Activated CD8-positive, alpha-beta T cell treated with anti-CD3 and anti-CD28 coated beads, Interleukin-2, amount 10 ng/mL, durations not matched to agents 7 days and 5 days (primary cell): ENCODE measurements at regions of chr15 and their contacts with region 1.

Region 1: DNA sequence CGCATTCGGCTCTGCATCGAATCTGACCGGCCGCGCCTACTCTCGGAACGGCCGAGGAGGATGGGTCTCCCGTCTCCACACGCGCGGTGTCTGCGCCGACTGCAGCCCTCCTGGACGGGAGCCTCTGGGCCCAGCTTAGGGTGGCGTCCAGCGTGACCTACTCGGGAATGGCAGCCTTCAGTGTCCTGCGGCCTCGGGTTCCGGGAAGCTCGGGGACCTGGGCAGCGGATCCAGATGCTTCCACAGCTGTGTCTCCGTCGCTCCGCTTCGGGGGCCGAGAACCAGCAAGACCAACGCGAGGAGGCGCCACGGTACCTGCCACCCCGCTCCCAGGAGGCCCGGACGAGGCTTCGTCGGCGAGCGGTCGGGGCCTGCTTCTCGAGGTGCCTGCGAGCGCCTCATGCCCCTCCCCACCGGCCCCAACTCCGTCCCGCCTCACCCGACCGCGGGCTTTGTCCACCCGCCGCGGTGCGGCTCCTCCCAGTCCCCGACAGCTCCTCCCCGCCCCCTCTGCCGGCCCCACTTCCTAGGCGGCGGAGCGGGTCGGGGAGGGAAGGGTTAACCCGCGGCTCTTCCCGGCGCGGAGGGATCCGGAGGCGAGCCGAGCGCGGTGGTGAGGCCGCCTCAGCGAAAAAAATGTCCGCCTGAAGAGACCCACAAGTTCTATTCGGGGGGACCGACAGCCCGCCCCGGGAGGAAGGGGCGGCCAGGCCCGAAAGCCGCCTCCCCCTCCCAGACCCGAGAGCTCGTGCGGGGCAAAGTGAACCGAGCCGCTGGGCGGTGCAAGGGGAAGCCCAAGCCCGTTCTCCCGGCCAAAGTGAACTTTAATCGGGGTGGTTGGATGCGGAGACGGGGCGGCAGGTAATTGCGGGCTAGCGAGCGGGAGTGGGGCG is at the start of gene TCF12:
- DNase-seq: peak; percentile 90
- ATAC-seq: peak; percentile 80
- H3K4me3 Mint-ChIP-seq: peak within 1 kb of the TSS; percentile 95
- H3K27ac Mint-ChIP-seq: peak within 1 kb of the TSS; percentile 91
- H3K4me1 Mint-ChIP-seq: peaks cover 33% of the 10 kb centered on the region
- H3K27me3 Mint-ChIP-seq: no peaks in the 10 kb centered on the region
- total RNA-seq, gene TCF12: 63.4 to 70.7 TPM

Region 2: GRCh38 chr15:56886932-56887781 is 31.1 kb before region 1 on chr15:
- CTCF ChIA-PET with region 1: interaction called, 5 read pairs
- POLR2A ChIA-PET with region 1: interaction called, 31 read pairs
- DNase-seq: peak; percentile 78
- ATAC-seq: peak; percentile 97
- H3K4me3 Mint-ChIP-seq: peak overlapping the region; percentile 77
- H3K27ac Mint-ChIP-seq: peak overlapping the region; percentile 75
- H3K4me1 Mint-ChIP-seq: peaks cover 20% of the 10 kb centered on the region
- H3K27me3 Mint-ChIP-seq: peaks cover 4% of the 10 kb centered on the region

Region 3: GRCh38 chr15:56906771-56907170 is 11.5 kb before region 1 on chr15:
- CTCF ChIA-PET with region 1: interaction called, 12 read pairs
- POLR2A ChIA-PET with region 1: interaction called, 3 read pairs
- DNase-seq: no peak
- ATAC-seq: no peak
- H3K4me3 Mint-ChIP-seq: no peak overlapping the region
- H3K27ac Mint-ChIP-seq: no peak overlapping the region
- H3K4me1 Mint-ChIP-seq: peaks cover 9% of the 10 kb centered on the region
- H3K27me3 Mint-ChIP-seq: no peaks in the 10 kb centered on the region

Region 4: GRCh38 chr15:56929399-56929798 is 11.1 kb after region 1 on chr15:
- CTCF ChIA-PET with region 1: interaction called, 10 read pairs
- POLR2A ChIA-PET with region 1: interaction called, 10 read pairs
- DNase-seq: no peak
- ATAC-seq: no peak
- H3K4me3 Mint-ChIP-seq: no peak overlapping the region
- H3K27ac Mint-ChIP-seq: no peak overlapping the region
- H3K4me1 Mint-ChIP-seq: peaks cover 27% of the 10 kb centered on the region
- H3K27me3 Mint-ChIP-seq: no peaks in the 10 kb centered on the region

Region 5: GRCh38 chr15:56968821-56969220 is 50.5 kb after region 1 on chr15:
- CTCF ChIA-PET with region 1: no interaction called
- POLR2A ChIA-PET with region 1: no interaction called
- DNase-seq: no peak
- ATAC-seq: no peak
- H3K4me3 Mint-ChIP-seq: no peak overlapping the region
- H3K27ac Mint-ChIP-seq: no peak overlapping the region
- H3K4me1 Mint-ChIP-seq: peaks cover 24% of the 10 kb centered on the region
- H3K27me3 Mint-ChIP-seq: no peaks in the 10 kb centered on the region

Region 6: DNA sequence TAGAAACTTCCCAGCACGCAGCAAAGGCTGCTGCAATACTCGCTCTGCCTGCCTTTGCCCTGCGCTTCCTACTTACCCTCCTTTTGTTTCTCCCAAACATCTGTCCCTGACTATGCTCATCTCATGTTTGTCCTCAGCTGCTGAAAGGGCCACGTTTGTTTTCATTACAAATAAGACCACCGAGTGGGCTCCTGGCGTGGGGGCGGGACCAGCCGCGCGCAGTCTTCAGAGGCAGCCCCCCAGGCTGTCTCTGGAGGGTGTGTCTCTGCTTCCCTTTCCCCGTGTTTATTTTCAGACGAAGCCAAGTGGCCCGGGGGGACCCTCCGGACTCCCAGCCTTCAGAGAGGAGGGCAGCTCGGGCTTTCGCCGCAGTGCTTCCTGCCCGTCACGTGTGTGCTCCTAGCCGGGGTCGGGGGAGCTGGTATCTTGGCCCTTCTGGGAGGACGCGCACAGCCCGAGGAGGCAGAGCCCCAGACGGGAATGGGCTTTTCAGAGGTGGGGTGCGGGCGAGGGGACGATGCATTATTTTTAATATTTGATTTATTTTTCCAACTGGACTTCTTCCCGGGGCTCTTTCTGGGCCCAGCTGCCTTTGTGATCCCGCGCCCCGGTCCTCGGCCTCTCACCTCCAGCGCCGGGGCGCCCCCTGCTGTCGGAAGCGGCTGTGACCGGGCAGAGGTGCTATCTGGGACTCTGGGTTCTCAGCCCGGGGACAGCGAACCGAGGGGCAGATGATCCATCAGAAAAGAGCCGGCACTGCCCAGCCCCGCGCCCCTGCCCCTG is 388.1 kb after region 1 on chr15:
- CTCF ChIA-PET with region 1: interaction called, 12 read pairs
- POLR2A ChIA-PET with region 1: no interaction called
- DNase-seq: peak; percentile 83
- ATAC-seq: peak; percentile 93
- H3K4me3 Mint-ChIP-seq: peak overlapping the region; percentile 57
- H3K27ac Mint-ChIP-seq: no peak overlapping the region
- H3K4me1 Mint-ChIP-seq: peaks cover 7% of the 10 kb centered on the region
- H3K27me3 Mint-ChIP-seq: peaks cover 9% of the 10 kb centered on the region